B cell (primary cell): ENCODE measurements at regions of chr10 and their contacts with region 1.

Region 1: GRCh38 chr10:25016376-25017154 is at the start of gene THNSL1:
- DNase-seq: peak; percentile 97
- ATAC-seq: peak; percentile 95
- H3K4me3 ChIP-seq: peak within 1 kb of the TSS; percentile 65 to 90 (median 72)
- H3K4me3 Mint-ChIP-seq: peak within 1 kb of the TSS; percentile 95
- H3K27ac ChIP-seq: peak within 1 kb of the TSS; percentile 79 to 96
- H3K27ac Mint-ChIP-seq: peak within 1 kb of the TSS; percentile 97
- H3K4me1 ChIP-seq: peaks cover 14 to 16% of the 10 kb centered on the region in 2 donors
- H3K4me1 Mint-ChIP-seq: peaks cover 22% of the 10 kb centered on the region
- H3K27me3 ChIP-seq: no peaks in the 10 kb centered on the region
- H3K27me3 Mint-ChIP-seq: no peaks in the 10 kb centered on the region
- CTCF ChIP-seq: no peak
- total RNA-seq, gene THNSL1: 4.3 and 4.9 TPM in 2 replicates

Region 2: DNA sequence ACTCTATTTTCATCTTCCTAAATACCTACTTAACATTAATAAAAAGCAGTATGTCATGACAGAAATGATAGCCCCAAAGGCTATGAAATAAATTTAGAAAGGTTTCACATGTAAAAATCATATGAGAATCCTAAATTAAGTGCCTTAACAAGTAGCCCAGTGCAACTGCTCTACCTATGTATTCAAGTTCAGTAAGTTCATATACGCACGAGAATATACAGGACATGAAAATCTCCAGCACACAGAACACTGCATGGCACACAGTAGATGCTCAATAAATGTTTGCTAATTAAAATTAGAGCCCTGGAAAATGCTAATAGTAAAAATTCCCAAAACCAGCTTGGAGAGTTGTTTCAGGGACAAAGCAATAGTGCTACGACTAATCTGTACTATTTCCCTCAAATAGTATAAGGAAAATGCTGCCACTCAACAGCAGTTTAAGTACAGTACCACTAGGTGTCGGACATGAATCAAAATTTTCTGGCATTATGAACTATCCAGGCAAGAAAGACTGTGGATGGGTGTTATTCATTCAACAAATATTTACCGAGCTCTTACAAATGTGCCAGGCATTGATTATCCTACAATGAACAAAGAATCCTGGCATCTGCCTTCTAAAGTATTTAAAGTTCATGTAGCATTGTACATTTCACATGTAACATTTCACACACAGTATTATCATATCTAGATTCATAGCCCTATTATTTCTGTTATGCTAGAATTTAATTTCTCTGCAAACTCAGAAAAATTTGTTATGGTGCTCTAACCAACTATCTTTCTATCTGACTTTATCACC is 373.7 kb before region 1 on chr10:
- CTCF ChIA-PET with region 1: no interaction called
- POLR2A ChIA-PET with region 1: no interaction called
- intact Hi-C with region 1: loop called (anchors 2 kb)
- DNase-seq: peak; percentile 57
- ATAC-seq: peak; percentile 67
- H3K4me3 ChIP-seq: no peak overlapping the region
- H3K4me3 Mint-ChIP-seq: no peak overlapping the region
- H3K27ac ChIP-seq: no peak overlapping the region
- H3K27ac Mint-ChIP-seq: no peak overlapping the region
- H3K4me1 ChIP-seq: no peaks in the 10 kb centered on the region
- H3K4me1 Mint-ChIP-seq: peaks cover 3% of the 10 kb centered on the region
- H3K27me3 ChIP-seq: no peaks in the 10 kb centered on the region
- H3K27me3 Mint-ChIP-seq: no peaks in the 10 kb centered on the region
- CTCF ChIP-seq: peak; percentile 81

Region 3: GRCh38 chr10:24887855-24888231 is 128.7 kb before region 1 on chr10:
- CTCF ChIA-PET with region 1: no interaction called
- POLR2A ChIA-PET with region 1: no interaction called
- intact Hi-C with region 1: loop called (anchors 2 kb)
- DNase-seq: no peak
- ATAC-seq: peak; percentile 5
- H3K4me3 ChIP-seq: peak overlapping the region in 2 of 5 experiments; percentile 11 to 37
- H3K4me3 Mint-ChIP-seq: peak overlapping the region; percentile 64
- H3K27ac ChIP-seq: peak overlapping the region in 1 of 2 donors; percentile 74
- H3K27ac Mint-ChIP-seq: peak overlapping the region; percentile 60
- H3K4me1 ChIP-seq: peaks cover 20 to 37% of the 10 kb centered on the region in 2 donors
- H3K4me1 Mint-ChIP-seq: peaks cover 44% of the 10 kb centered on the region
- H3K27me3 ChIP-seq: no peaks in the 10 kb centered on the region
- H3K27me3 Mint-ChIP-seq: no peaks in the 10 kb centered on the region
- CTCF ChIP-seq: no peak

Region 4: GRCh38 chr10:25028711-25029110 is 12.1 kb after region 1 on chr10:
- CTCF ChIA-PET with region 1: no interaction called
- POLR2A ChIA-PET with region 1: no interaction called
- intact Hi-C with region 1: no loop called
- DNase-seq: no peak
- ATAC-seq: no peak
- H3K4me3 ChIP-seq: no peak overlapping the region
- H3K4me3 Mint-ChIP-seq: no peak overlapping the region
- H3K27ac ChIP-seq: no peak overlapping the region
- H3K27ac Mint-ChIP-seq: no peak overlapping the region
- H3K4me1 ChIP-seq: no peaks in the 10 kb centered on the region
- H3K4me1 Mint-ChIP-seq: no peaks in the 10 kb centered on the region
- H3K27me3 ChIP-seq: no peaks in the 10 kb centered on the region
- H3K27me3 Mint-ChIP-seq: no peaks in the 10 kb centered on the region
- CTCF ChIP-seq: no peak

Region 5: GRCh38 chr10:25169740-25170139 is 153.2 kb after region 1 on chr10:
- CTCF ChIA-PET with region 1: no interaction called
- POLR2A ChIA-PET with region 1: no interaction called
- intact Hi-C with region 1: no loop called
- DNase-seq: no peak
- ATAC-seq: no peak
- H3K4me3 ChIP-seq: no peak overlapping the region
- H3K4me3 Mint-ChIP-seq: no peak overlapping the region
- H3K27ac ChIP-seq: no peak overlapping the region
- H3K27ac Mint-ChIP-seq: no peak overlapping the region
- H3K4me1 ChIP-seq: no peaks in the 10 kb centered on the region
- H3K4me1 Mint-ChIP-seq: peaks cover 2% of the 10 kb centered on the region
- H3K27me3 ChIP-seq: peaks cover 0 to 13% (median 10%) of the 10 kb centered on the region in 4 experiments
- H3K27me3 Mint-ChIP-seq: peaks cover 18% of the 10 kb centered on the region
- CTCF ChIP-seq: no peak

Region 6: DNA sequence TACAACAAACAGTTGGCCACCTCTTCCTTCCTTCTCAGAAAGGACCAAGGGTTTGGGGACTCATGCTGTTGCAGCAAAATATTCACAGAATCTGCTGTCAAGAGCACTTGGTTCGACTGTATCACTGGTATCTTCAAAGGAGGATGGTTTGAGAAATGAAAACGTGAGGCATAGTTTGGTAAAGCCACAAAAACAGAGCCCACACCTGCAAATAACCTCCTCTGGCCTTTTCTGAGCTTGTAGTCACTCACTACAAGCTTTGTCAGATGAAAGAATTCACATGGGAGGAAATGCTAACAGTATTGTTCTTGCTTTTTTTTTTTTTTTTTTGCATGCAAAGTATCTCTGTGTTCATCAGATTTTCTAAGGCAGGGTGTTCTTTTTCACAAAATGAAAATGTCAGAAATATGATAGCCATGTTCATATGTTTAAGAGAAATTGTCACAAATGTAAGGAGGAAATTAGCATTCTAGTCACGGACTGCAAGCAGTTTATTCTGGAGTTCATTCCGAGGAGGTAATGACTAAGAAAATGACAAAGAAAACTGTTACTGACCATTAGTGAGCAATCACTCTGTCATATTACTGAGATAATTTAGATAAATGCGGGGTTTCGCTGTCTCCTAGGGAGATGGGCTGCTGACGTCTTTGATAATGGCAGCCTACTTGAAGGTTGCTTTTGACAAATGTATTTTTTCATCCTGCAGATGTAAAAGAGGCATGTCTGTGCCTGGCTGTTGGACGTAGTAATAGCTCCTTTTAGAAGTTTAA is 799.6 kb after region 1 on chr10:
- CTCF ChIA-PET with region 1: no interaction called
- POLR2A ChIA-PET with region 1: no interaction called
- intact Hi-C with region 1: no loop called
- DNase-seq: no peak
- ATAC-seq: no peak
- H3K4me3 ChIP-seq: no peak overlapping the region
- H3K4me3 Mint-ChIP-seq: no peak overlapping the region
- H3K27ac ChIP-seq: no peak overlapping the region
- H3K27ac Mint-ChIP-seq: no peak overlapping the region
- H3K4me1 ChIP-seq: peaks cover 4 to 6% of the 10 kb centered on the region in 2 donors
- H3K4me1 Mint-ChIP-seq: peaks cover 8% of the 10 kb centered on the region
- H3K27me3 ChIP-seq: no peaks in the 10 kb centered on the region
- H3K27me3 Mint-ChIP-seq: peaks cover 12% of the 10 kb centered on the region
- CTCF ChIP-seq: no peak